PC-3 (cell line): ENCODE measurements at regions of chr3 and their contacts with region 1.

Region 1: GRCh38 chr3:15108082-15108545 is 9.2 kb upstream of the RBSN start:
- DNase-seq: peak; percentile 78
- ATAC-seq: peak; percentile 94
- H3K4me3 ChIP-seq: no peak overlapping the region
- H3K27ac ChIP-seq: no peak overlapping the region
- H3K4me1 ChIP-seq: peaks cover under 1% of the 10 kb centered on the region; the same call in 1 of the 2 replicates
- H3K27me3 ChIP-seq: no peaks in the 10 kb centered on the region
- CTCF ChIP-seq: peak; percentile 92

Region 2: DNA sequence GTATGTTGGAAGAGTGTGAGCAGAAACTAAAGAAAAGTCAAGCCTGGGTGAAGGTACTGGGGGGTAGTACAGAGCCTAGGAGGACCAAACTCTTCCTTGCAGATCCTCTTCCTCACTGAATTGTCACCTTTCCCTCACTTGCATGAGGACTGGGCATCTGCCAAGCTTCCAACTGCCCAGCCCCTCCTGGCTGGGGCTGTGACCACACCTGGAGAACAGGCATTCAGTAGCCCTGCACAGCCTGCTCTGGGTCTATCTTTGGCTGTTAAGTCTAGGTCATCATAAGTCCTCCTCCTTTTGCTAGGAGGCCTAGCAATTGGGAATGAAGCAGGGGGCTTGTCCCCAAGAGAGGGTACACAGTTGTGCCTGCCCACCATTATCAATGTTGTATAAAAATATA is 153.2 kb after region 1 on chr3:
- CTCF ChIA-PET with region 1: no interaction called
- POLR2A ChIA-PET with region 1: no interaction called
- intact Hi-C with region 1: loop called (anchors 5 kb)
- DNase-seq: peak; percentile 41
- ATAC-seq: peak; percentile 46
- H3K4me3 ChIP-seq: no peak overlapping the region
- H3K27ac ChIP-seq: no peak overlapping the region
- H3K4me1 ChIP-seq: no peaks in the 10 kb centered on the region
- H3K27me3 ChIP-seq: no peaks in the 10 kb centered on the region
- CTCF ChIP-seq: no peak

Region 3: GRCh38 chr3:15405448-15406050 is 297.4 kb after region 1 on chr3:
- CTCF ChIA-PET with region 1: no interaction called
- POLR2A ChIA-PET with region 1: no interaction called
- intact Hi-C with region 1: loop called (anchors 5 kb)
- DNase-seq: peak; percentile 72
- ATAC-seq: peak; percentile 77
- H3K4me3 ChIP-seq: no peak overlapping the region
- H3K27ac ChIP-seq: no peak overlapping the region
- H3K4me1 ChIP-seq: peaks cover 8% of the 10 kb centered on the region
- H3K27me3 ChIP-seq: no peaks in the 10 kb centered on the region
- CTCF ChIP-seq: peak; percentile 93

Region 4: GRCh38 chr3:15557511-15557946 is 449.4 kb after region 1 on chr3:
- CTCF ChIA-PET with region 1: no interaction called
- POLR2A ChIA-PET with region 1: no interaction called
- intact Hi-C with region 1: loop called (anchors 1 kb)
- DNase-seq: peak; percentile 94
- ATAC-seq: peak; percentile 100
- H3K4me3 ChIP-seq: no peak overlapping the region
- H3K27ac ChIP-seq: no peak overlapping the region
- H3K4me1 ChIP-seq: 0 out of 2 replicates have a peak, but pooled peaks cover 3% of the 10 kb centered on the region
- H3K27me3 ChIP-seq: no peaks in the 10 kb centered on the region
- CTCF ChIP-seq: peak; percentile 80